AG04449 (cell line): ENCODE measurements at regions of chr14 and their contacts with region 1.

Region 1: GRCh38 chr14:24093901-24094761 is at the start of gene PCK2:
- DNase-seq: peak; percentile 63
- H3K4me3 ChIP-seq: peak within 1 kb of the TSS; percentile 87
- CTCF ChIP-seq: peak; percentile 9

Region 2: GRCh38 chr14:24013654-24014514 is 80.2 kb before region 1 on chr14:
- CTCF ChIA-PET with region 1: interaction called, 26 read pairs
- POLR2A ChIA-PET with region 1: no interaction called
- DNase-seq: no peak
- H3K4me3 ChIP-seq: no peak overlapping the region
- CTCF ChIP-seq: peak; percentile 75

Region 3: GRCh38 chr14:24051789-24052655 is 42.1 kb before region 1 on chr14 and contains the start of gene CARMIL3:
- CTCF ChIA-PET with region 1: interaction called, 536 read pairs
- POLR2A ChIA-PET with region 1: interaction called, 7 read pairs
- DNase-seq: no peak
- H3K4me3 ChIP-seq: peak within 1 kb of the TSS; percentile 58
- CTCF ChIP-seq: no peak

Region 4: GRCh38 chr14:24075485-24076301 is 18.4 kb before region 1 on chr14:
- CTCF ChIA-PET with region 1: interaction called, 121 read pairs
- POLR2A ChIA-PET with region 1: interaction called, 8 read pairs
- DNase-seq: no peak
- H3K4me3 ChIP-seq: no peak overlapping the region
- CTCF ChIP-seq: no peak

Region 5: DNA sequence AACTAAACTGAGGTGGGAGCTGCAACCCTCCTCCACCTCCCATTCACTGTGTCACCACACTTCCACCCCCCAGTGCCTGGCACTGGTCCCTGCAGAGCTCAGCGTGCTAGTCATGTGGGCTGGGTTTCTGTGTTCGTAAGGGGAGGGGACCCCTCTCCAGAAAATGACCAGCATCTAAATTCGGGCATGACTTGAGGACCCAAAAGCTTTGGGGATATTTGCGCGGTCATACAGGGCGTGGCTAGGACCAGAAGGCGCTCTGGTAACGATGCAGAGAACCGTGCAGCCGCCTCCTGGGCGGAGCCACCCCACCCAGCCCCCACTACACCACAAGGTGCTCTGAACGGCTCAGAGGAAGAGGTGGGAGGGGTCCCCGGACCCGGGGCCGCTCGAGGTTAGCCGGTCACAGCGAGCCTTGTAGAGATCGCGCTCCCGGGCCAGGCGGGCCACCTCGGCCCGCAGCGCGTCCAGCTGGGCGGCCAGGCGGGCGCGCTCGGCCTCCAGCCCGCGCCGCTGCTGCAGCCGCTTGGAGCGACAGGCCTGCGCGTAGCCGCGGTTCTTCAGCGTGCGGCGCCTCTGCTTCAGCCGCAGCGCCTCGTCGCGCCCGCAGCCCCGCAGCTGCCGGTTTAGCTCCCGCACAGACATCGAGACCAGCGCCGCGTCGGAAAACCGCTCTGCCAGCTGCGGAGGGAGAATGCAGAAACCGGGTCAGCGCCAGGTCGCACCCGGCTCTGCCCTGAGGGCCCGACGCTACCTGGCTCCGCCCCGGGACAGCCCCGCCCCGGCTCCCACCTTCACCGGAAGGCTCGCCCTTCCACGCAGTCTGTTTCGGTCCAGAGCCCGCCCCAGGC is 13.0 kb before region 1 on chr14:
- CTCF ChIA-PET with region 1: interaction called, 121 read pairs
- POLR2A ChIA-PET with region 1: interaction called, 8 read pairs
- DNase-seq: no peak
- H3K4me3 ChIP-seq: peak overlapping the region; percentile 55
- CTCF ChIP-seq: no peak

Region 6: DNA sequence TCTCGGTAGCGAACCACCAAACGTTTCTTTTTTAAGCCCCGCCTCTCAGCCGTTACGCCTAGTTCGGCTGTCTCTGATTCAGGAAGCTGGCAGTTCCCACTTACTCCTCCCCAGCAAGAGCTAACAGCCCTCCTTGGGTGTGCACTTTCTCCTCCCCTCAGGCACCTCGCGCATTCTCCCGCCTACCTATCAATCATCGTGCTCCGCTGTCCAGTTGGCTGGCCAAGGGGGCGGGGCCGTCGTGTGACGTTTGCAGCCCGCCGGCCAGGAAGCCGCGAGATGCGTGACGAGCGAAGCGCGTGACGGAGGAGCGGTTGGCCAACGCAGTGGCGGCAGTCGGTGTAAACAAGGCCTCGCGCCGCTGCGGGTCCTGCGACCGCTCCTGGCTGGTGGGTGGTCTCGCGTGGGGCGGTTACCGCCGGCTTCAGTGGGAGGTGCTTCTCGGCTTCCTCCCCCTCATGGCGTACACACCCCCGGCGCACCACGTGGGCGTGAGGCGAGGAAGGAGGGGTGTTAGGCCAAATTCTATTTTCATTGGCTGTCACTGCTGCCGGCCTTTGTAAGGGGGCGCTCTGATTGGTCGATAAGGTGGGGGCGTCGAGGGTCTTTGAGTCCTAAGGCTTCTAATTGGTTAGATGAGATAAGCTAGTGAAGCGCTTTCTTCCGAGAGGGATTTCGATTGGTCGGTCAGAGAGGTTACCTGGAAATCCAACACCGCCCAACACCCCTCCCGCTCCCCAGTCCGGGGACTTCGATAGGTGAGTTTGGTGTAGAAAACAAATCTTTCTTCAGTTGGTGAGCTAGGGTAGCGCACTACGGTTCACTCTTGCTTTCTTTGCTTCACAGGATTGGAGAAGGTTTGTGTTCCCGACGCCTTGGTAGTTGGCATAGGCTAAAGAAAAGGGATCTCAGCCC is 20.7 kb after region 1 on chr14 and contains the starts of genes DCAF11 and NRL:
- CTCF ChIA-PET with region 1: interaction called, 164 read pairs
- POLR2A ChIA-PET with region 1: interaction called, 44 read pairs
- DNase-seq: peak; percentile 99
- H3K4me3 ChIP-seq: peak within 1 kb of the TSS; percentile 96
- CTCF ChIP-seq: no peak